Lower leg skin (tissue), 4 donors: ENCODE measurements at regions of chr9 and their contacts with region 1.

Region 1: GRCh38 chr9:96854073-96854876 is at the start of gene ZNF782:
- DNase-seq: peak; percentile 93 to 98
- H3K4me3 ChIP-seq: peak within 1 kb of the TSS; percentile 66
- CTCF ChIP-seq: no peak
- POLR2A ChIP-seq: no peak
- total RNA-seq, gene ZNF782: 5.0 to 13.4 (median 7.9) TPM

Region 2: GRCh38 chr9:96553070-96553469 is 301.2 kb before region 1 on chr9:
- intact Hi-C with region 1: no loop called
- DNase-seq: no peak
- H3K4me3 ChIP-seq: no peak overlapping the region
- CTCF ChIP-seq: no peak
- POLR2A ChIP-seq: no peak

Region 3: GRCh38 chr9:97386733-97387503 is 532.6 kb after region 1 on chr9:
- intact Hi-C with region 1: loop called (anchors 10 kb)
- DNase-seq: peak; percentile 24 to 90
- H3K4me3 ChIP-seq: no peak overlapping the region
- CTCF ChIP-seq: peak in 1 of 3 donors; percentile 83
- POLR2A ChIP-seq: no peak